H1 (cell line): ENCODE measurements at regions of chr15 and their contacts with region 1.

Region 1: GRCh38 chr15:64989416-64990167 is at the start of gene SPG21:
- DNase-seq: peak; percentile 41 to 89
- H3K4me3 ChIP-seq: peak within 1 kb of the TSS; percentile 81 to 98 (median 88)
- H3K27ac ChIP-seq: peak within 1 kb of the TSS; percentile 61; the same call in 1 of the 2 replicates
- H3K4me1 ChIP-seq: peaks cover 0 to 5% (median 1%) of the 10 kb centered on the region in 4 experiments; a peak in 4 of 7 replicates
- H3K27me3 ChIP-seq: no peaks in the 10 kb centered on the region; a peak in 1 of 7 replicates
- CTCF ChIP-seq: no peak
- EP300 ChIP-seq: 0 out of 3 replicates have a peak, but pooled peaks of 1 of the 2 experiments have one; percentile 68
- POLR2A ChIP-seq: 0 out of 3 replicates have a peak, but pooled peaks of 1 of the 2 experiments have one; percentile 48
- RAD21 ChIP-seq: no peak
- total RNA-seq, gene SPG21: 68.6 and 72.7 TPM in 2 replicates

Region 2: DNA sequence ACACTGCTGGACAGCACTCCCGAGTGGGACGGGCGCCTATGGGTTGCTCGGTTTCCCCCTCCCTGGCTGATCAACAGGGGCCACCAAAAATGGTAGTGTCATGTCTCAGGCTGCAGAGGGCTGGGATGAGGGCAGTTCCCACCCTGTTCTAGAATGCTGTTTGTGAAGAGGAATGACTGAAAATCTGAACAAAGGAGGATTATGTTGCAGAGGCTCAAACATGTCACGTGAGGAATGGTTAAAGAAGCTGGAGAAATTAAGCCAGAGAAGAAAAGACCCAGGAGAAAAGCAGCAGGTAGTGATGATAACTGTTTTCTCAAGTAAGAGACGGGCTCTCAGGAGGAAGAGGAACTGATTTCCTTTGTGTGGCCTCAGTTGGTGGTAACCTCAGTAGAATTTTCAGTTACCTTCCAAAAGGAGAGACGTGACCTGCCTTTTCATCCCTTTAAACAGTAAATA is 10.3 kb before region 1 on chr15:
- CTCF ChIA-PET with region 1: interaction called, 4 read pairs
- POLR2A ChIA-PET with region 1: interaction called, 12 read pairs
- DNase-seq: no peak
- H3K4me3 ChIP-seq: peak overlapping the region in 1 of 4 experiments; percentile 1; a peak in 1 of 8 replicates
- H3K27ac ChIP-seq: peak overlapping the region; percentile 53; the same call in 1 of the 2 replicates
- H3K4me1 ChIP-seq: peaks cover 3 to 6% (median 4%) of the 10 kb centered on the region in 4 experiments; a peak in 5 of 7 replicates
- H3K27me3 ChIP-seq: no peaks in the 10 kb centered on the region
- CTCF ChIP-seq: peak in 1 of 3 experiments; percentile 1; a peak in 1 of 4 replicates
- EP300 ChIP-seq: no peak
- POLR2A ChIP-seq: no peak
- RAD21 ChIP-seq: no peak